ENCODE measurements at regions of chr14 and their contacts with region 1.

Region 1: GRCh38 chr14:103104654-103105452 is 10.3 kb downstream of the EXOC3L4 start:
- DNase-seq: peak; percentile 57 to 84 (median 70)
- ATAC-seq: peak; percentile 93
- H3K4me3 ChIP-seq: no peak overlapping the region
- H3K4me3 Mint-ChIP-seq: peak overlapping the region; percentile 30
- H3K27ac ChIP-seq: no peak overlapping the region
- H3K27ac Mint-ChIP-seq: no peak overlapping the region
- H3K4me1 ChIP-seq: peaks cover 20% of the 10 kb centered on the region
- H3K4me1 Mint-ChIP-seq: peaks cover 10% of the 10 kb centered on the region
- H3K27me3 ChIP-seq: peaks cover 30 to 33% of the 10 kb centered on the region in 2 experiments
- H3K27me3 Mint-ChIP-seq: peaks cover 38% of the 10 kb centered on the region
- CTCF ChIP-seq: peak; percentile 87

Region 2: DNA sequence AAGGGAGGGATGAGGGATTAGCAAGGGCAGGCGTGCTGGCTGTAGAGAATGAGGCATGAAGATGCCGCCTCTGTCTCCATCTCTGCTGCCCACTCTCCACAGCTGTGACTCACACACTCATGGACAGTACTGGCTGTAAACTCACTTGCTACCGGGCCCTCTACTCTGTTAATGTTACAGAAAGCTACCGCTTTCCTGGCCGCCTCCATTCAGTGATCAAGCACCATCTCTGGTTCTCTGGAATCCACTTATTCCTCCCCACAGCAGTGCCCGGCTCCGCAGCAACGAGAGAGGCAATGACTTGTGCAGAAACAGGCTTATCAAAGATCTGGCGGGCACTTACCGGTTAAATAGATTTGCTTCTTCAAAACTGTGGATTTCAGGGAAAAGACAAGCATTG is 147.6 kb before region 1 on chr14:
- CTCF ChIA-PET with region 1: no interaction called
- POLR2A ChIA-PET with region 1: no interaction called
- intact Hi-C with region 1: no loop called
- DNase-seq: no peak
- ATAC-seq: no peak
- H3K4me3 ChIP-seq: no peak overlapping the region
- H3K4me3 Mint-ChIP-seq: no peak overlapping the region
- H3K27ac ChIP-seq: no peak overlapping the region
- H3K27ac Mint-ChIP-seq: no peak overlapping the region
- H3K4me1 ChIP-seq: no peaks in the 10 kb centered on the region
- H3K4me1 Mint-ChIP-seq: no peaks in the 10 kb centered on the region
- H3K27me3 ChIP-seq: no peaks in the 10 kb centered on the region
- H3K27me3 Mint-ChIP-seq: no peaks in the 10 kb centered on the region
- CTCF ChIP-seq: no peak

Region 3: DNA sequence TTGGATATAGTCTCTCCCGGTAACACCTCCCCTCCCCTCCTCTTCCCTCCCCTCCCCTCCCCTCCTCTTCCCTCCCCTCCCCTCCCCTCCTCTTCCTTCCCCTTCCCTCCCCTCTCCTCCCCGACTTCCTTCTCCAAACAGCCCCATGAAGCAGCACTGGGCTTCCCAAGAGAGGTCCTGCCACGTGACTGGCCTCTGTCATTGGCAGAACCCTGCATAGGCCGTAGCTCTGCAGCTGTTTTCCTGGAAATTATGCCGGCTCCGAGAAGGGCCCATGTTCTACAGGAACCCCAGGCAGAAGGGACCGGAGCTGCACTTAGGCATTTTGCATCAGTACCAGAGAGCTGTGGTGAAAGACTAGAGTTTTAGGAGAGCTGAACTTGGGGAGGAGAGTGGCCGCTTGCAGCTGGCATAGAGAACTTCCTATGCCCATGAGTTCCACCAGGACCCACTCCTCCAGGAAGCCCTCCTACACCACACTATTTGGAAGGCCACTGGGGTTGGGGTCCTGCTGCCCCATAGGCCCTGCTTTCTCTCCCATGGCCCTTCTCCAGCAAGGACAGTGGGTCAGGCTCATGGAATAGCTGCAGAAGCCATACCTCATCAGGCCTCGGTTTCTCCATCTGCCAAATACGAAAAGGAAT is 13.3 kb after region 1 on chr14:
- CTCF ChIA-PET with region 1: interaction called, 15 read pairs
- POLR2A ChIA-PET with region 1: no interaction called
- intact Hi-C with region 1: no loop called
- DNase-seq: peak in 2 of 14 experiments; percentile 43 to 46
- ATAC-seq: no peak
- H3K4me3 ChIP-seq: no peak overlapping the region
- H3K4me3 Mint-ChIP-seq: no peak overlapping the region
- H3K27ac ChIP-seq: no peak overlapping the region
- H3K27ac Mint-ChIP-seq: no peak overlapping the region
- H3K4me1 ChIP-seq: peaks cover 30% of the 10 kb centered on the region
- H3K4me1 Mint-ChIP-seq: peaks cover 8% of the 10 kb centered on the region
- H3K27me3 ChIP-seq: peaks cover 15 to 28% of the 10 kb centered on the region in 2 experiments
- H3K27me3 Mint-ChIP-seq: peaks cover 19% of the 10 kb centered on the region
- CTCF ChIP-seq: no peak

Region 4: DNA sequence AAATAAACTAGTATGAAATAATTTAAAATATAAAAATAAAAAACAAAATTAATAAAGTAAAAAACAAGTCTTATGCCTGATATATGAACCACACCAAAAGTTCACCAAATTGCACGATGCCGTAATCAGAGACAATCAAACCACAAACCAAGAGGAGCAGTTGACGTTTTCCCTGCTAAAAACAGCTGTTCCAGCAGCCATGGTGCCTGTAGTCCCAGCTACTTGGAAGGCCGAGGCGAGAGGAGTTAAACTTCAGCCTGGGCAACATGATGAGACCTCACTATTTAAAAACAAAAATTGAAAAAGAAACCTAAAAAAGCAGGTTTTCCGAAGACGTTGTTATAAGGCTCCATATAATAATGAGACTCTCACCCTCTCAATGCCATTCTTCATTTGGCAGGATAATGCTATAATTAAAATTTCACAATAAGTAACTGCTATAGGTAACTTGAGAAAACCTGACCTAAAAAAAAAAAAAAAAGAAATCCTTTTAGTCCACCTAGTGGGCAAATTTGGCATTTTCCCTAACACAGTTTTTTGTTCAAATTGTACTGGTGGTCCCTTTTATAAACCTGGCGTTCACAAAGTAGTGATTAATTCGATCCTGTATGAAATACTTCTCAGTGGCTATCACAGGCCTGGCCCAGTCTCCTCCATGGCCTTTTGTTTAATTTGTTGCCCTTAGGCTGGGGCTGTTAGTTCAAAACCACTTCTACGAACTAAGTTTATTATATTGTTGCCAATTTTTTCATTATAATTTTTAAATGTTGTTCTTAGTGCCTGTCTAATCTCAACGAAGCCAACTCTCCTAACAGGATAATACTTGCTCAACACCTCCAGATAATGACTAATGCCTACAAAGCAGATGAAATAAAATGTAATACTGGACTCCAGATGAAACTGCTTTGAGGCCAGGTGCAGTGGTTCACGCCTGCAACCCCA is 80.5 kb after region 1 on chr14:
- CTCF ChIA-PET with region 1: interaction called, 3 read pairs
- POLR2A ChIA-PET with region 1: no interaction called
- intact Hi-C with region 1: loop called in 1 of 2 experiments (anchors 10 kb)
- DNase-seq: peak in 3 of 14 experiments; percentile 5 to 40 (median 37)
- ATAC-seq: no peak
- H3K4me3 ChIP-seq: no peak overlapping the region
- H3K4me3 Mint-ChIP-seq: no peak overlapping the region
- H3K27ac ChIP-seq: no peak overlapping the region
- H3K27ac Mint-ChIP-seq: no peak overlapping the region
- H3K4me1 ChIP-seq: peaks cover 7% of the 10 kb centered on the region
- H3K4me1 Mint-ChIP-seq: peaks cover 12% of the 10 kb centered on the region
- H3K27me3 ChIP-seq: peaks cover 21 to 26% of the 10 kb centered on the region in 2 experiments
- H3K27me3 Mint-ChIP-seq: peaks cover 58% of the 10 kb centered on the region
- CTCF ChIP-seq: peak; percentile 75

Region 5: GRCh38 chr14:103292426-103293374 is 187.8 kb after region 1 on chr14:
- CTCF ChIA-PET with region 1: interaction called, 6 read pairs
- POLR2A ChIA-PET with region 1: interaction called, 4 read pairs
- intact Hi-C with region 1: loop called (anchors 1 to 2 kb)
- DNase-seq: peak; percentile 46 to 82 (median 65)
- ATAC-seq: peak; percentile 85
- H3K4me3 ChIP-seq: no peak overlapping the region
- H3K4me3 Mint-ChIP-seq: no peak overlapping the region
- H3K27ac ChIP-seq: no peak overlapping the region
- H3K27ac Mint-ChIP-seq: no peak overlapping the region
- H3K4me1 ChIP-seq: no peaks in the 10 kb centered on the region
- H3K4me1 Mint-ChIP-seq: no peaks in the 10 kb centered on the region
- H3K27me3 ChIP-seq: peaks cover 0 to 2% of the 10 kb centered on the region in 2 experiments
- H3K27me3 Mint-ChIP-seq: peaks cover 18% of the 10 kb centered on the region
- CTCF ChIP-seq: peak; percentile 84

Region 6: GRCh38 chr14:103546652-103547454 is 442.0 kb after region 1 on chr14:
- CTCF ChIA-PET with region 1: no interaction called
- POLR2A ChIA-PET with region 1: no interaction called
- intact Hi-C with region 1: loop called (anchors 2 to 5 kb)
- DNase-seq: peak; percentile 59 to 85 (median 71)
- ATAC-seq: peak; percentile 88
- H3K4me3 ChIP-seq: no peak overlapping the region
- H3K4me3 Mint-ChIP-seq: no peak overlapping the region
- H3K27ac ChIP-seq: no peak overlapping the region
- H3K27ac Mint-ChIP-seq: no peak overlapping the region
- H3K4me1 ChIP-seq: peaks cover 8% of the 10 kb centered on the region
- H3K4me1 Mint-ChIP-seq: no peaks in the 10 kb centered on the region
- H3K27me3 ChIP-seq: peaks cover 3 to 8% of the 10 kb centered on the region in 2 experiments
- H3K27me3 Mint-ChIP-seq: no peaks in the 10 kb centered on the region
- CTCF ChIP-seq: peak; percentile 92